Endothelial cell of umbilical vein (primary cell): ENCODE measurements at regions of chr14 and their contacts with region 1.

Region 1: DNA sequence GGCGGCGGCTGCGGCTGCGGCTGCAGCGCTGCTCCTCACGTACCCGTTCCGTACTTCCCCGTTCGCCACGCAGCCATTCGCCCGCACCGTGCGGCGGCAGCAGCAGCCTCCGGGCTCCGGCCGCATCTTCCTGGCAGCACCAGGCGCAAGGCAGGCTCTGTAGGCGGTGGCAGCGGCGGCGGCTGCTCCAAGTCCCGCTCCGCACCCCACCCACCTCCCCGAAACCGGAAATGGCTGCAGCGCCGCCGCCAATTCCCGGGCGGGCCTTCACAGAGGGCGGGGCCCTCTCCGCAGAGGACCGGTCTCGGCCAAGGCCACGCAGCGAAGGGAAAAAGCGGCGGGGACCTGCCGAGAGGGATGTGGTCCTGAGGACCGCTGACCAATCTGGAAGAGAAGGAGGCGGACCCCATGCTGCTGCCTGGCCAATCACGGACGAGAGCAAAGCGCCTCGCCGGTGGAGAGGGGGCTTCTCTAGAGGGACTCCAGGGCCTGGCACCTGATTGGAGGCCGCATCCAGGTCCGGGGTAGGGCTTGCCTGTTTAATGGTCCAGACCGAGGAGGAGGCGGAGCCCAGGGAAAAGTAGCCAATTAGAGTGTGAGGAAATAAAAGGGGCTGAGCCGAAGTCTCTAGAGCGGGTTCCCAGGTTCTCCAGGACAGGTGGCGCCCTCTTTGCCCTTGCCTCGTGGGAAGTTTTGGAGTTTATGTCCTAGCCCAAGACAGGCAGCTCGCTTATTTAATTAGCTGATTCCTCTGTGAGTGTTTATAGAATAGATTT is at the start of gene SPTLC2:
- DNase-seq: peak; percentile 100
- H3K4me3 ChIP-seq: peak within 1 kb of the TSS; percentile 86 to 94 (median 90)
- H3K27ac ChIP-seq: peak within 1 kb of the TSS; percentile 14
- H3K4me1 ChIP-seq: peaks cover 25% of the 10 kb centered on the region
- H3K27me3 ChIP-seq: peaks cover 0 to 4% of the 10 kb centered on the region in 2 experiments
- CTCF ChIP-seq: no peak
- POLR2A ChIP-seq: peak; percentile 76
- total RNA-seq, gene SPTLC2: 57.2 and 71.3 TPM in 2 replicates

Region 2: GRCh38 chr14:77580964-77581505 is 35.6 kb before region 1 on chr14:
- CTCF ChIA-PET with region 1: interaction called, 5 read pairs
- POLR2A ChIA-PET with region 1: interaction called, 8 read pairs
- dilution Hi-C with region 1: no loop called
- intact Hi-C with region 1: loop called (anchors 1 kb)
- DNase-seq: peak; percentile 89
- H3K4me3 ChIP-seq: peak overlapping the region in 1 of 3 experiments; percentile 53
- H3K27ac ChIP-seq: peak overlapping the region; percentile 42
- H3K4me1 ChIP-seq: peaks cover 37% of the 10 kb centered on the region
- H3K27me3 ChIP-seq: no peaks in the 10 kb centered on the region
- CTCF ChIP-seq: no peak
- POLR2A ChIP-seq: no peak

Region 3: GRCh38 chr14:77603654-77604255 is 12.9 kb before region 1 on chr14:
- CTCF ChIA-PET with region 1: interaction called, 7 read pairs
- POLR2A ChIA-PET with region 1: interaction called, 3 read pairs
- dilution Hi-C with region 1: no loop called
- intact Hi-C with region 1: loop called (anchors 1 kb)
- DNase-seq: peak; percentile 65
- H3K4me3 ChIP-seq: no peak overlapping the region
- H3K27ac ChIP-seq: peak overlapping the region; percentile 38
- H3K4me1 ChIP-seq: peaks cover 32% of the 10 kb centered on the region
- H3K27me3 ChIP-seq: no peaks in the 10 kb centered on the region
- CTCF ChIP-seq: peak; percentile 25 to 56
- POLR2A ChIP-seq: no peak

Region 4: GRCh38 chr14:77641534-77642341 is 25.1 kb after region 1 on chr14:
- CTCF ChIA-PET with region 1: interaction called, 4 read pairs
- POLR2A ChIA-PET with region 1: no interaction called
- dilution Hi-C with region 1: no loop called
- intact Hi-C with region 1: loop called (anchors 1 kb)
- DNase-seq: peak; percentile 82
- H3K4me3 ChIP-seq: peak overlapping the region in 2 of 3 experiments; percentile 22 to 47
- H3K27ac ChIP-seq: peak overlapping the region; percentile 1
- H3K4me1 ChIP-seq: peaks cover 20% of the 10 kb centered on the region
- H3K27me3 ChIP-seq: no peaks in the 10 kb centered on the region
- CTCF ChIP-seq: no peak
- POLR2A ChIP-seq: no peak